SK-N-SH (cell line): ENCODE measurements at regions of chr19 and their contacts with region 1.

Region 1: GRCh38 chr19:6014551-6015135 is 36.7 kb upstream of the RANBP3 start:
- DNase-seq: peak; percentile 20
- H3K4me3 ChIP-seq: no peak overlapping the region
- H3K27ac ChIP-seq: no peak overlapping the region
- H3K4me1 ChIP-seq: peaks cover 0 to 8% of the 10 kb centered on the region in 2 experiments; a peak in 1 of 4 replicates
- H3K27me3 ChIP-seq: no peaks in the 10 kb centered on the region
- CTCF ChIP-seq: no peak
- EP300 ChIP-seq: no peak
- RAD21 ChIP-seq: no peak

Region 2: GRCh38 chr19:5993648-5994358 is 20.8 kb before region 1 on chr19:
- CTCF ChIA-PET with region 1: interaction called, 448 read pairs
- POLR2A ChIA-PET with region 1: interaction called, 4 read pairs
- DNase-seq: peak; percentile 93
- H3K4me3 ChIP-seq: no peak overlapping the region
- H3K27ac ChIP-seq: peak overlapping the region in 1 of 2 experiments; percentile 94; a peak in 2 of 4 replicates
- H3K4me1 ChIP-seq: peaks cover 0 to 32% of the 10 kb centered on the region in 2 experiments; a peak in 2 of 4 replicates
- H3K27me3 ChIP-seq: no peaks in the 10 kb centered on the region
- CTCF ChIP-seq: no peak
- EP300 ChIP-seq: peak in 1 of 2 experiments; percentile 84; a peak in 2 of 4 replicates
- RAD21 ChIP-seq: 0 out of 2 replicates have a peak, but pooled peaks have one; percentile 1

Region 3: DNA sequence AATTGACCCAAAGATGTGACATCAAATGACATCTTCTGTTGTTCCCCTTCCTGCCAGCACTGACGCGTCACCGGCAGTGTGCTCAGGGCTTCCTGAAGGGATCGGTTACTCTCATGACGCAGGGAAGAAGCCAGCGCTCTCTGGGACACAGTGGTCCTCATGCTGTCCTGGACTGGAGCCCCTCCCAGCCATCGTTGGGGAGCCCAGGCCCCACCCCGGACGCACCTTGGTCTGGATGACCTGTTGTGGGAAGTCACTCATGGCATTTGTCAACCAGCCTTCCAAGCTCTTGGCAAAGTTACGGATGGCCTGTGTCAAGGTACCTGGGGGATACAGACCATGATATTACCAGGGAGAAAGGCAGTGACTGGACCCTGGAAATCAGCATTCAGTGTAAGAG is 10.7 kb before region 1 on chr19:
- CTCF ChIA-PET with region 1: no interaction called
- POLR2A ChIA-PET with region 1: no interaction called
- DNase-seq: no peak
- H3K4me3 ChIP-seq: no peak overlapping the region
- H3K27ac ChIP-seq: no peak overlapping the region
- H3K4me1 ChIP-seq: no peaks in the 10 kb centered on the region
- H3K27me3 ChIP-seq: no peaks in the 10 kb centered on the region
- CTCF ChIP-seq: no peak
- EP300 ChIP-seq: no peak
- RAD21 ChIP-seq: no peak